AG04449 (cell line): ENCODE measurements at regions of chr11 and their contacts with region 1.

Region 1: GRCh38 chr11:40293655-40294348 is 1165.7 kb downstream of the LRRC4C start:
- DNase-seq: peak; percentile 61
- H3K4me3 ChIP-seq: peak overlapping the region; percentile 76
- CTCF ChIP-seq: peak; percentile 90

Region 2: DNA sequence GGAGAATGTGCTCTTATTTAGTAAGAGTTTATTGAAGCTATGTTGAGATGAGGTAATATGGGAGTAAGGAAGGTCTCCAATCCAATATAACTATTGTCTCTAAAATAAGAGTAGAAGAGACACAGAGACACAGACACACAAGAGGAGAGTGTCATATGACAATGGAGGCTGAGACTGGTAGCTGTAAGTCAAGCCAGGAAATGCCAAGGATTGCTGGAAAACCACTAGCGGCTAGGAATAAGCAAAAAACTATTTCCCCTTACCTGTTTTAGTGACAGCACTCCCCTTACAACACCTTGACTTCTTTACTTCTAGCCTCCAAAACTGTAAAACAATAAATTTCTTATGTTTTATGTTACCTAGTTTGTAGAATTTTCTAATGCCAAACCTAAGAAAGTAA is 487.1 kb before region 1 on chr11:
- CTCF ChIA-PET with region 1: no interaction called
- POLR2A ChIA-PET with region 1: no interaction called
- DNase-seq: no peak
- H3K4me3 ChIP-seq: no peak overlapping the region
- CTCF ChIP-seq: no peak

Region 3: GRCh38 chr11:40306938-40307548 is 13.2 kb after region 1 on chr11:
- CTCF ChIA-PET with region 1: interaction called, 82 read pairs
- POLR2A ChIA-PET with region 1: no interaction called
- DNase-seq: no peak
- H3K4me3 ChIP-seq: no peak overlapping the region
- CTCF ChIP-seq: peak; percentile 83

Region 4: GRCh38 chr11:40321537-40321936 is 27.7 kb after region 1 on chr11:
- CTCF ChIA-PET with region 1: interaction called, 13 read pairs
- POLR2A ChIA-PET with region 1: no interaction called
- DNase-seq: no peak
- H3K4me3 ChIP-seq: no peak overlapping the region
- CTCF ChIP-seq: no peak

Region 5: DNA sequence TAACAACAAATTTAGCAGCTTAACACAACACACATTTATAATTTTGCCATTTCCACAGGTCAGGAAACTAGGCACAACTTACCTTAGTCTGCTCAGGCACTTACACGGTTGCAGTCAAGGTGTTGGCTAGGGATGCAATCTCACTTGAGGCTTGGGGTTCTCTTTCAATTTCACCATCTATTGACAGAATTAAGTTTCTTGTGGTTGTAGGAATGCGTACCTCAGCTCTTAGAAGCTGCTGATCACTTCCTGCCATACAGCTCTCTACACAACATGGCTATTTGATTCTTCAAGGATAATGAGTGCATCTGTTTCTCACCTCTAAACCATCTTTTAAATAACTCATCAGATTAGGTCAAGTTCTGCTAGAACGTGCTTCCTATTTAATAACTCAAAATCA is 197.5 kb after region 1 on chr11:
- CTCF ChIA-PET with region 1: no interaction called
- POLR2A ChIA-PET with region 1: no interaction called
- DNase-seq: no peak
- H3K4me3 ChIP-seq: no peak overlapping the region
- CTCF ChIP-seq: no peak